ENCODE measurements at regions of chr21 and their contacts with region 1.

Region 1: GRCh38 chr21:29298348-29299045 is at the start of gene BACH1:
- DNase-seq: peak; percentile 87 to 92
- ATAC-seq: peak; percentile 87 to 95 (median 94)
- H3K4me3 ChIP-seq: peak within 1 kb of the TSS; percentile 51 to 88 (median 79)
- H3K27ac ChIP-seq: peak within 1 kb of the TSS; percentile 86 to 99 (median 95)
- H3K4me1 ChIP-seq: peaks cover 4 to 69% (median 40%) of the 10 kb centered on the region in 9 donors
- H3K27me3 ChIP-seq: no peaks in the 10 kb centered on the region
- CTCF ChIP-seq: peak in 8 of 9 donors; percentile 34 to 73 (median 56)
- total RNA-seq, gene BACH1: 29.4 to 78.7 (median 51.3) TPM

Region 2: DNA sequence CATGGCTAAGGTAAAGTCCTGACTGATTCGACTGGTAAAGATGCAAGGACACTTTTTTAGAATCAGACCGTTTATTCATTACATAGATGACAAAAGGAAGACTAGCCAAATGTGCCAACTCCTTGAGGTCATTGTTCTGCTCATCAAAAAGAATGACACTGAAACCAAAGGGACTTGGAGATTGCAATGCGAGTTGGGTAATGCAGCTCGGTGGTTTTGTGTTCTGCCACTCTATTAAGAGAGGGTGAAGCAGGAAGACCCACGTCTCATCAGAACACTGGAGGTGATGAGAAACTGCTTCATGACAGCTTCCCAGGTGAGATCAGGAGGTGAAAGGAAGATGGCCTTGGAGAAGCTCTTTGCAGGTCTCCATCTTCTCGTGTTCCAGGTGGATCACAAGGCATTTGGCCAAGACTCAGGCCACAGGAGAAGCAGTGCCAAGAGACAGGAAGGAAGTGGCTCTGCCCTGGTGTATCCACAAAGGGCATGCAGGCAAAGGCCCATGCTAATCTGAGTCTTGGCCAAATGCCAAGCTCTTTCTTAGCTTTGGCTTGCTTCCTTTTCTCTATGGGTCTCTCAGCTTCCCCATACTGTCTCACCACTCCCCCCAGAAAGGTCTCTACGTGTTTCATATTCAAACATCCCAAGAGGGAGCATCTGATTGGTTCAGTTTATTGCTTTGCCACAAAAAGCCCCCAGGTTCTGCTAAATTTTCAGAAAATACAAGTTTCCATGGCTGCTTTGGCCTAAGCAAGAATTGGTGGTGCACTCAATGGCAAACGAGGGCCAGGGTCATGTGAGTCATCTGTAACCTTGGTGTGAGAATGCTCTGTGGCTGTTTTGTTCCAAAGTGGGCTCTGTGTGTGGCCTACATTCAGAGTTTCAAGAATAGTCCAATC is 219.4 kb before region 1 on chr21:
- intact Hi-C with region 1: loop called in 1 of 10 experiments (anchors 5 kb)
- DNase-seq: peak in 1 of 2 donors; percentile 32
- ATAC-seq: peak in 4 of 8 donors; percentile 28 to 40 (median 31)
- H3K4me3 ChIP-seq: no peak overlapping the region
- H3K27ac ChIP-seq: peak overlapping the region in 2 of 10 donors; percentile 6 to 93
- H3K4me1 ChIP-seq: peaks cover 0 to 49% (median 21%) of the 10 kb centered on the region in 9 donors
- H3K27me3 ChIP-seq: no peaks in the 10 kb centered on the region
- CTCF ChIP-seq: no peak

Region 3: GRCh38 chr21:29085106-29085752 is 213.3 kb before region 1 on chr21:
- intact Hi-C with region 1: loop called in 1 of 10 experiments (anchors 5 kb)
- DNase-seq: no peak
- ATAC-seq: no peak
- H3K4me3 ChIP-seq: no peak overlapping the region
- H3K27ac ChIP-seq: peak overlapping the region in 2 of 10 donors; percentile 19 to 31
- H3K4me1 ChIP-seq: peaks cover 0 to 34% (median 24%) of the 10 kb centered on the region in 9 donors
- H3K27me3 ChIP-seq: no peaks in the 10 kb centered on the region
- CTCF ChIP-seq: no peak

Region 4: DNA sequence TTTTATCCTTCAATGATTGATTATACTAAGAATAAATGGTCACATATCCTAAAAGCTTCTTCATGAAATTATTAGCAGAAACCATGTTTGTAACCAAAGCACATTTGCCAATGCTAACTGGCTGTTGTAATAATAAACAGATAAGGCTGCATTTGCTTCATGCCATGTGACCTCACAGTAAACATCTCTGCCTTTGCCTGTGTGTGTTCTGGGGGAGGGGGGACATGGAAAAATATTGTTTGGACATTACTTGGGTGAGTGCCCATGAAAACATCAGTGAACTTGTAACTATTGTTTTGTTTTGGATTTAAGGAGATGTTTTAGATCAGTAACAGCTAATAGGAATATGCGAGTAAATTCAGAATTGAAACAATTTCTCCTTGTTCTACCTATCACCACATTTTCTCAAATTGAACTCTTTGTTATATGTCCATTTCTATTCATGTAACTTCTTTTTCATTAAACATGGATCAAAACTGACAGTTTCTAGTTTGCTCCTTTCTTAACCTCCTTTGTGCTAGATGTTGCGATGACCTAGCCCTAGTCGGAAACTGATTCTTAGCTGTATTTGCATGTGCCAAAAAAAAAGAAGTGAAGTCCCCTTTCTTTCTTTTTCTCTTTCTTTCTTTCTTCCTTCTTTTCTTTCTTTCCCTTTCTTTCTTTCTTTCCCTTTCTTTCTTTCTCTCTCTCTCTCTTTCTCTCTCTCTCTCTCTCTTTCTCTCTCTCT is 122.9 kb before region 1 on chr21:
- intact Hi-C with region 1: loop called in 6 of 10 experiments (anchors 5 to 10 kb)
- DNase-seq: no peak
- ATAC-seq: peak in 4 of 8 donors; percentile 42 to 68 (median 58)
- H3K4me3 ChIP-seq: no peak overlapping the region
- H3K27ac ChIP-seq: peak overlapping the region in 6 of 10 donors; percentile 15 to 76 (median 35)
- H3K4me1 ChIP-seq: peaks cover 0 to 62% (median 15%) of the 10 kb centered on the region in 9 donors
- H3K27me3 ChIP-seq: no peaks in the 10 kb centered on the region
- CTCF ChIP-seq: no peak

Region 5: DNA sequence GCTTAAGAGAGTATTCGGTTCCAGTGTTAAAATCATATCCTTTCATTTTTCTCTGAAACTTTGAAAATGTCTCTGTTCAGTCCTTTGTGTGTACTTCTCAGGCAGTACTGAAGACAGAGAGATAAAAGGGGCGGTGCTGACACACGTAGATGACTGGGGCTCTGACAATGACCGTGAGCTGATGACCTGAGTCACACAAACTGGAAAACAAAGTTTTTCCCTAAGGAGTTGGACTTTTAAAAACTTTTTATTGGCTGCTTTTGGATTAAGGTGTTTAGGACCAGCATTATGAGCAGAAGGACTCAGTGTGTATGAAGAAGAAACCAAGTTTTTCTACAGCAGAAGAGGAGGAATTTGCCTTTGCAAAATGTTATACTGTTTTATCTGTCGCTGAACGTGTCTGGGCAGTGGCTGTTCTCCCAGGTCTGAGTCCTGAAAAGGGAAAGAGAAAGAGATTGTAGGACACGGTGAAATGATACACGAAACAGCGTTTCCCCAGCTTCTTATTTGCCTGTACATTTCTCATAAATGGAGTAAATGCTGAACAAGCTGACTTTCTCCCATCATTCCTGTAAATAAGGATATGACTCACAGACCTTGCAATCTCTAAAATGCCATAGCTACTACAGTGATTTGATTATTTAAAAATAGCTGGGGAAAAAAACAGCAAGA is 116.6 kb before region 1 on chr21:
- intact Hi-C with region 1: loop called in 6 of 10 experiments (anchors 5 to 10 kb)
- DNase-seq: no peak
- ATAC-seq: peak; percentile 79 to 92 (median 90)
- H3K4me3 ChIP-seq: peak overlapping the region in 9 of 10 donors; percentile 14 to 46 (median 38)
- H3K27ac ChIP-seq: peak overlapping the region; percentile 24 to 97 (median 81)
- H3K4me1 ChIP-seq: peaks cover 0 to 57% (median 17%) of the 10 kb centered on the region in 9 donors
- H3K27me3 ChIP-seq: no peaks in the 10 kb centered on the region
- CTCF ChIP-seq: no peak

Region 6: GRCh38 chr21:29334712-29335428 is 36.4 kb after region 1 on chr21:
- intact Hi-C with region 1: loop called in 5 of 10 experiments (anchors 5 kb)
- DNase-seq: no peak
- ATAC-seq: no peak
- H3K4me3 ChIP-seq: no peak overlapping the region
- H3K27ac ChIP-seq: peak overlapping the region in 1 of 10 donors; percentile 13
- H3K4me1 ChIP-seq: peaks cover 0 to 59% (median 14%) of the 10 kb centered on the region in 9 donors
- H3K27me3 ChIP-seq: no peaks in the 10 kb centered on the region
- CTCF ChIP-seq: no peak

Region 7: GRCh38 chr21:29342363-29342957 is 44.0 kb after region 1 on chr21:
- intact Hi-C with region 1: loop called in 5 of 10 experiments (anchors 5 kb)
- DNase-seq: peak; percentile 63 to 67
- ATAC-seq: peak; percentile 75 to 97 (median 90)
- H3K4me3 ChIP-seq: peak overlapping the region in 6 of 10 donors; percentile 6 to 23 (median 16)
- H3K27ac ChIP-seq: peak overlapping the region in 9 of 10 donors; percentile 10 to 72 (median 50)
- H3K4me1 ChIP-seq: peaks cover 0 to 62% (median 42%) of the 10 kb centered on the region in 9 donors
- H3K27me3 ChIP-seq: no peaks in the 10 kb centered on the region
- CTCF ChIP-seq: peak in 1 of 9 donors; percentile 10

Region 8: DNA sequence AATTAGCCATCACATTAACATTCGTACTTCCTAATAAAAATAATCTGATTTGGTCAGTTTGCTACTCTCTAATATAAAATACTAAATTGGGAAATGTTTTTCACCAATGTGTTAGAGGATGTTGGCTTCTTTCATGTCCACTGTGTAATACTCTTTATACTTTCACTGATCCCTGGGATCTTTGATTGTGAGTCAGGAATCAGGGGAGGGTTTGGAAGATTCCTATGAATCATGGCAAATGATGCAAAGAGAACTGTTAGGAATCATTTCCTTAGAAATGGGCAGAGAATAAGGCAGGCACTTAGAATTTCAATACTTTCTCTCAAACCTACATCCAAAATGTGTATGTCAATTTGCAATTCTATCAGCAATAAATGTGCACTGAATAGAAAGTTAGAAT is 953.3 kb after region 1 on chr21:
- intact Hi-C with region 1: no loop called
- DNase-seq: no peak
- ATAC-seq: no peak
- H3K4me3 ChIP-seq: no peak overlapping the region
- H3K27ac ChIP-seq: no peak overlapping the region
- H3K4me1 ChIP-seq: no peaks in the 10 kb centered on the region
- H3K27me3 ChIP-seq: no peaks in the 10 kb centered on the region
- CTCF ChIP-seq: no peak